Aorta (tissue), 5 donors: ENCODE measurements at regions of chrX and their contacts with region 1.

Region 1: DNA sequence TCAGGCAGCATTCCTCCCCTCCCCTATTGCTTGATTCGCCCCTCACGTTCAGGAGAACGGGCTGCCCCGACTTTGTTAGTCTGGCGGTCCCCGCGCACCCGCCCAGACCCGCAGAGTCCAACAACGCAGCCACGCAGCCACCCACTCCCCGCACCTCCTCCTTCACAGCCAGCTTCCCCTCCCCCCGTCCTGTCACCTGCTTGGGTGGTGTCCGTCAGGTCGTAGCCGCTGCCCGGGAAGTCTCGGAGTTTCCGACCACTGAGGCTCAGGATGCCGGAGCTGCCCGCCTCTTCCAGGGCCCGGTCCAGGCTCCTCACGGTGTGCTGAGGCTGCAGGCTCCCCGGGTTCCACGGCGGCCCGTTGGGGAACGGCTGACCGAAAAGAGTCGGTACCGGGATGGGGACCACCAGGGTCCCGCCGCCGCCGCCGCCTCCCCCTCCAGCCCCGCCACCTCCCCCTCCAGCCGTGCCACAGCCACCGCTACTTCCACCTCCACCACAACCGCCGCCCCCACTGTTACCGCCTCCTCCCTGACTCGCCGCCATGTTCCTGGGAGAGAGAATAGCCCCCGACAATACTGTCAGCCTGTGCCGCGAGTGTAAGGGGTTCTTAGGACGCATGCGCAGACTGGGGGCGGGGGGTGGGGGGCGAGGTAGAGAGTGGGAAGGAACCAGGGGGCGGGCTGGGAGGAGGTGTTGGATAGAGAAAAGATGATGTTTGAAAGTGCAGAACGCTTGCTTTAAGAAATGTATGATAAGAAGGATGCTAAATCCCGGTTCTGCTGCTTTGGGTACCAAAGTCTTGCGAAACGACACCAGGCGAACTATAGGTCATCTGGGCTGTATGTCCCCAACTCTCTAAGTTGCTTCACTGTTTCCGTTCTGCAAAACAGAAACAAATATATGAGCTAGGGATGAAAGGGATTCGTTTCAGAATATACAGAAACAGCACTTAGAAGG is at the start of gene LRCH2:
- DNase-seq: peak; percentile 51 to 84
- ATAC-seq: peak; percentile 80
- H3K4me3 ChIP-seq: peak within 1 kb of the TSS; percentile 45 to 72
- H3K27ac ChIP-seq: peak within 1 kb of the TSS in 1 of 2 donors; percentile 7
- H3K4me1 ChIP-seq: no peaks in the 10 kb centered on the region
- H3K27me3 ChIP-seq: no peaks in the 10 kb centered on the region
- total RNA-seq, gene LRCH2: 9.5 to 10.9 TPM

Region 2: GRCh38 chrX:115324194-115324593 is 90.4 kb after region 1 on chrX:
- intact Hi-C with region 1: loop called in 1 of 2 experiments (anchors 5 kb)
- DNase-seq: peak; percentile 66 to 76
- ATAC-seq: no peak
- H3K4me3 ChIP-seq: no peak overlapping the region
- H3K27ac ChIP-seq: no peak overlapping the region
- H3K4me1 ChIP-seq: peaks cover 0 to 2% of the 10 kb centered on the region in 2 donors
- H3K27me3 ChIP-seq: no peaks in the 10 kb centered on the region

Region 3: DNA sequence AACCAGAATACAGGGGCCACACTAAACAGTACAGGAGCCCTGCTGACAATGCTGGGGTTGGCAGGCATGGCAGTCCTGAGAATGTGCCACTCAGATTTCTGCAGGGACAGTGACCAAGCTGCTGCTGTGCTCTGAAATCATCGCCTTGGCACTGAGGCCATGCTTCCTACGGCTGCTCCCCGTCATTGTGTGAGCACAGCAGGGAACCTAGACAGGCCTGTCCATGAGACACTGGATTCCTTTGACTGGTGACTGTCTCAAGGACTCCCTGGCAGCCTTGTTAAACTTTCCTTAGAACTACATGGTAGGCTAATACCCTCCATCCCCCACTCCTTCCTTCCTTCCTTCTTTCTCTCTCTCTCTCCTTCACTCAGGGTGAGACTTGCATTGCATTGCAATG is 167.2 kb after region 1 on chrX:
- intact Hi-C with region 1: no loop called
- DNase-seq: no peak
- ATAC-seq: peak; percentile 22
- H3K4me3 ChIP-seq: no peak overlapping the region
- H3K27ac ChIP-seq: peak overlapping the region in 1 of 2 donors; percentile 17
- H3K4me1 ChIP-seq: no peaks in the 10 kb centered on the region
- H3K27me3 ChIP-seq: no peaks in the 10 kb centered on the region